Activated CD4-positive, alpha-beta T cell treated with anti-CD3 and anti-CD28 coated beads, Interleukin-2, amount 10 ng/mL, durations not matched to agents 24 days and 14 days (primary cell): ENCODE measurements at regions of chr6 and their contacts with region 1.

Region 1: DNA sequence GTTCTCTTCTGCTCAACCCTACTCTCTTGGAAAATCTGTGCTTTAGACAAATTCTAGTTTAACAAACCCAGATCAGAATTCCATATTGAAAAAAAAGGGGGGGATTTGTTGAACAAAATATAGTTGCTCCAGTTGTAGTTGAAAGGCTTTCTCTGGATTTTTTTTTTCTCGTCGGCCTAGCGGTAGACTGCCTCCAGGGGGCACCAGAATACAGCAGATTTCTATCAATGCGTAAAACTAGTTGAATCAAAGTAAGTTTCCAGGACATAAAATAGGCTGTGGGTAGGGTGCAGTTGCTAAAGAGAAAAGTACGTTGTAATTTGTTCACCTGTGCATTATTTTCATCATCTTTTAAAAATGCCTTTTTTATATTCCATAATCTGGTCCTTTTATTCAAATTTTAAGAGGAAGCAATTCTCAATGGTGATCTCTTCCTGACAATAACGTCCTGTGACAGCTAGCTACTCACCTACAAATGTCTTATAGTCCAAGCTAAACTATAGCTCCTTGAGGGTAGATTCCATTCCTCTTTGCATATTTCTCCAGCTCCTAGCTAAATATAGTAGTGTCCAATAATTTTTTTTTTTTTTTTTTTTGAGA is 105.4 kb downstream of the PERP start:
- DNase-seq: peak; percentile 89
- H3K4me3 Mint-ChIP-seq: no peak overlapping the region
- H3K27ac Mint-ChIP-seq: no peak overlapping the region
- H3K4me1 Mint-ChIP-seq: peaks cover 18% of the 10 kb centered on the region
- H3K27me3 Mint-ChIP-seq: peaks cover 9% of the 10 kb centered on the region

Region 2: DNA sequence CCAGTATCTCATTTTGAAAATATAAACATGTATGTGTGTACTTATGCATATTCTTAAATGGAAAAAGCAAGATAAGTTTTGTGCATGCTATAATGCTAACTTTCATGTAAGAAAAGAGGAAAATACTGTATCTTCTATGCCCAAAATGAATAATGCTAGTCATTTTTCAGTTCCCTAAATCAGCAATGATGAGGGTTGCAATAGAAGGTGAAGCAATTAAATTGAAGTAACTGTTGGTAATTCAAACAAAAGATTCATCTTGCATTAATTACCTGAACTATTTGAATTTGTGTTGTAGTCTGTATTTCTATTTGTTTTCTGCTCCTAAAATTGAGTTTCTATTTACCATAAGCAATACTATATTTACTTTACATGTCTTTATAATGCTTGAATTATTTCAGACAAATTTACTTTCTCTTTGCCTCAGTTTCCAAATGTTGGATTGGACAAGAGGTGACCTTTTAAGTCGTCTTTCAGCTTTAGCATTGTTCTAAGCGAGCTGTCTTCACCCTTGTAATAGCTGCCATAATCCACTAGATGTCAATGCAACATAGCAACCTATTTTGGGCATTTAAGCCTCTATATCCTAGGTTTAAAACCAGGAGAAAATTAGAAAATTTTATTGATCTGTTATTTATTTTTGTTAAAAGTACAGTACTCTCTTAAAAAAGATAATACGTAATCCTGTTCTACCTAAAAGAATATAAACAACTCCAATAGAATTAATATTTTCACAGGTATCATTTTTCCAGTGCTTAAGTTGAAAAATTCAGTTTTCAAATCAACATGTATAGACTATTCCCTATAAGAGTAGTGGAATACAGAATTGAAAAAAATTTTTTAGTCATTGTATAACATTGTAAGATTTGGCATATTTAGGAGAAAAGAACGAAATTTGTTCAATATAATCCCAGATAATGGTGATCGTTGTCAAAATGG is 730.3 kb before region 1 on chr6:
- intact Hi-C with region 1: loop called (anchors 5 kb)
- DNase-seq: peak; percentile 64
- H3K4me3 Mint-ChIP-seq: no peak overlapping the region
- H3K27ac Mint-ChIP-seq: no peak overlapping the region
- H3K4me1 Mint-ChIP-seq: peaks cover 2% of the 10 kb centered on the region
- H3K27me3 Mint-ChIP-seq: peaks cover 27% of the 10 kb centered on the region

Region 3: DNA sequence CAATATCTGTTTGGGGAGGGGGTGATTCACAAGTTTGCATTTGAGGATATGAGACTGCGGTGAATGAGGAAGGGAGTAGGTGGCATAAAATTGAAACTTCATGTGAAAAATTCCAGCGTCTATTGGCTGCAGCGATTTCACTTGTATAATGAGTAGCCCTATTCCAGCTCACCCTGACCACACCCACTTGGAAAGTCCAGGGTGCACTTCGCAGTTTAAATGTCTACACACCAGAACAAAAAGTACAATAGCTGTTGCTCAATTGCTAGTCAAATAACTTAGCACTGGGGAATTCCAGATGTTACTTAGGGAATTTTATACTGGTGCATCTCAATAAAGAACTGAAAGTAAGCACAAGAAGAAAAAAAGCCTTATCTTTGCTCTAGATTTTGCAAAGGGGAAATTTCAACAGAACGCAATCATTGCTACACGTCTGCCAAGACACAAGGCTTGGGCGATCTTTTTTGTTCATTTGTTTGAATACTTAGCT is 128.5 kb before region 1 on chr6:
- intact Hi-C with region 1: loop called (anchors 2 kb)
- DNase-seq: peak; percentile 89
- H3K4me3 Mint-ChIP-seq: peak overlapping the region; percentile 87
- H3K27ac Mint-ChIP-seq: peak overlapping the region; percentile 86
- H3K4me1 Mint-ChIP-seq: peaks cover 44% of the 10 kb centered on the region
- H3K27me3 Mint-ChIP-seq: no peaks in the 10 kb centered on the region

Region 4: DNA sequence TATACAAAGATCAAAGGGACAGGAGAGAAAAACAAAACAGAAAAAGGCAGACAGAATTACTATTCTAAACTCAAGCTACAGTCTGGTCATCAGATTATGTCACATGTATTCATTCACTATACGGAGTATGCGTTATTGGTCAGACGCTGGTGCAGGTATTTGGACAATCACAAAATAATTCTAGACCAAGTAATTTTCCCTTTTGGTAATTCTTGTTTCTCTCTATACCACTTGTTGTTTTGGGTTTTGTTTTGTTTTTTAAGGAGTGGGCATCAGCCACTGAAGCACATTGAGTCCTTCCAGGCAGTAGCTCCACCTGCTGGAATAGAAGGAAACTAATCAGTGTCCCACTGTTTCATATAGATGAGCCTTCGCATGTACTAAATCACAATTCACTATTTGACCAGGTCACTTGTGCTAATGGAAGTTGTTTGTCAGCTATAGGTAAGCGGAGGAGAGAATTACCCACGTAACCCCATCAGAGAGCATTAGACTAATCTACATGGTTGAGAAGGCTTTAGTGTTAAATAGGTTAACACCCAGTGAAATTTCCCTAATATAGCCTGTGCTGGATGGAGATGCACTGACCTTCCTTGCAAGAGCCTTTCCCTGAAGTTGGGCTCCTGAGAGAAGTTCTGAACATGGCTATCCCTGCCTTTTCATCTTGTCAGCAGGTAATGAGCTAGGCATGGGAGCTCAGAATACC is 56.9 kb before region 1 on chr6:
- intact Hi-C with region 1: loop called (anchors 2 kb)
- DNase-seq: peak; percentile 77
- H3K4me3 Mint-ChIP-seq: peak overlapping the region; percentile 23
- H3K27ac Mint-ChIP-seq: peak overlapping the region; percentile 81
- H3K4me1 Mint-ChIP-seq: peaks cover 57% of the 10 kb centered on the region
- H3K27me3 Mint-ChIP-seq: no peaks in the 10 kb centered on the region

Region 5: GRCh38 chr6:138517635-138518034 is 515.8 kb after region 1 on chr6:
- intact Hi-C with region 1: loop called (anchors 5 kb)
- DNase-seq: peak; percentile 88
- H3K4me3 Mint-ChIP-seq: no peak overlapping the region
- H3K27ac Mint-ChIP-seq: no peak overlapping the region
- H3K4me1 Mint-ChIP-seq: peaks cover 19% of the 10 kb centered on the region
- H3K27me3 Mint-ChIP-seq: peaks cover 5% of the 10 kb centered on the region